HCT116 (cell line): ENCODE measurements at regions of chr16 and their contacts with region 1.

Region 1: GRCh38 chr16:19105891-19106624 is 7.7 kb upstream of the ITPRIPL2 start:
- DNase-seq: no peak
- ATAC-seq: no peak
- H3K4me3 ChIP-seq: no peak overlapping the region
- H3K27ac ChIP-seq: no peak overlapping the region
- H3K4me1 ChIP-seq: peaks cover 20 to 59% of the 10 kb centered on the region in 2 experiments
- H3K27me3 ChIP-seq: no peaks in the 10 kb centered on the region
- CTCF ChIP-seq: no peak
- POLR2A ChIP-seq: no peak
- RAD21 ChIP-seq: no peak

Region 2: DNA sequence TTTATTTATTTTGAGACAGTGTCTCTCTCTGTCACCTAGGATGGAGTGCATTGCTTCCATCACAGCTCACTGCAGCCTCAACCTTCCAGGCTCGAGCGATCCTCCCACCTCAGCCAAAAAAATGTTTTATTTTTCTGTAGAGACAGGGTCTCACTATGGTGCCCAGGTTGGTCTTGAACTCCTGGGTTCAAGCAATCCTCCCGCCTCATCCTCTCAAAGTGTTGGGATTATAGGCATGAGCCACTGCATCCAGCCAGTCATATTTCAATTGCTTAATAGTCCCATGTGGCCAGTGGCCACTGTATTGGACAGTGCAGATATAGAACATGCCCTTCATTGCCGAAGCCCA is 107.0 kb before region 1 on chr16:
- CTCF ChIA-PET with region 1: no interaction called
- POLR2A ChIA-PET with region 1: no interaction called
- RAD21 ChIA-PET with region 1: no interaction called
- intact Hi-C with region 1: no loop called
- DNase-seq: no peak
- ATAC-seq: no peak; the same call in 1 of the 2 replicates
- H3K4me3 ChIP-seq: 0 out of 4 replicates have a peak overlapping the region, but pooled peaks of 1 of the 2 experiments have one; percentile 10
- H3K27ac ChIP-seq: peak overlapping the region; percentile 76
- H3K4me1 ChIP-seq: peaks cover 19 to 40% of the 10 kb centered on the region in 2 experiments
- H3K27me3 ChIP-seq: no peaks in the 10 kb centered on the region
- CTCF ChIP-seq: no peak
- POLR2A ChIP-seq: no peak
- RAD21 ChIP-seq: no peak

Region 3: DNA sequence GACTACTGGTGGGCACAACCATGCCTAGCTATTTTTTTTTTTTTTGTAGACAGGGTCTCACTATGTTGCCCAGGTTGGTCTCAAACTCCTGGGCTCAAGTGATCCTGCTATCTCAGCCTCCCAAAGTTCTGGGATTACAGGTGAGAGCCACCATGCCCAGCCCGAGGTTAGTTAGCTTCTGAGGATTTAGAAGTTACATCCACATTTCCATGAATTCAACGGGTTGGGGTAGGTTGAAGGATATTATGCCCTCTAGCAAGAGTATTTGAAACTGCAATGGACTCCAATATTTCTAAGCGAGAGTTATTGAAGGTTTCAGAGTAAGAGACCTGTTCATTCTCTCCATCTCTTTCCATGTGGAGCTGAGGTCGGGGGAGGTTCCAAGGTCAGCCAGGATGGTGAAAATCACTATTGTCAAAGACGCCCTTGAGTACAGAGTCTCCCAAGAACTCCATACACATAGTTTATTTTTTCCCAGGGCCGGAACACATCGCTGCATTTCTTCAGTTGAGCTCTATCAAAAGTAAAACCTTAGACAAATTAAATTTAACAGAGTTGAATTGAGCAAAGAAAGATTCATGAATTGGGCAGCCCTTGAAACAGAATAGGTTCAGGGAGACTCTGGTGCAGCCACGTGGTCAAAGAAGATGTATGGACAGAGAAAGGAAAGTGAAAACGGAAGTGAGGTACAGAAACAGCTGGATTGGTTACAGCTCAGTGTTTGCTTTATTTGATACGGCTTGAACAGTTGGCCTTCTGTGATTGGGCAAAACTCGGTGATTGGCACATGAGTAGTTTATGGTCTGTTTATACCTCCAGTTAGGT is 11.3 kb before region 1 on chr16:
- CTCF ChIA-PET with region 1: interaction called, 10 read pairs
- POLR2A ChIA-PET with region 1: interaction called, 15 read pairs
- RAD21 ChIA-PET with region 1: no interaction called
- intact Hi-C with region 1: no loop called
- DNase-seq: peak; percentile 56
- ATAC-seq: peak; percentile 76
- H3K4me3 ChIP-seq: no peak overlapping the region
- H3K27ac ChIP-seq: peak overlapping the region; percentile 78; the same call in 1 of the 2 replicates
- H3K4me1 ChIP-seq: peaks cover 24 to 42% of the 10 kb centered on the region in 2 experiments
- H3K27me3 ChIP-seq: no peaks in the 10 kb centered on the region
- CTCF ChIP-seq: peak in 2 of 3 experiments; percentile 8 to 33; a peak in 2 of 6 replicates
- POLR2A ChIP-seq: no peak
- RAD21 ChIP-seq: no peak

Region 4: GRCh38 chr16:19118938-19119431 is 12.9 kb after region 1 on chr16:
- CTCF ChIA-PET with region 1: interaction called, 4 read pairs
- POLR2A ChIA-PET with region 1: interaction called, 13 read pairs
- RAD21 ChIA-PET with region 1: no interaction called
- intact Hi-C with region 1: no loop called
- DNase-seq: no peak
- ATAC-seq: no peak
- H3K4me3 ChIP-seq: peak overlapping the region; percentile 3 to 46; a peak in 3 of 4 replicates
- H3K27ac ChIP-seq: peak overlapping the region; percentile 77
- H3K4me1 ChIP-seq: peaks cover 45 to 60% of the 10 kb centered on the region in 2 experiments
- H3K27me3 ChIP-seq: no peaks in the 10 kb centered on the region
- CTCF ChIP-seq: no peak
- POLR2A ChIP-seq: no peak
- RAD21 ChIP-seq: peak; percentile 24; the same call in 1 of the 2 replicates

Region 5: GRCh38 chr16:19142939-19143598 is 37.0 kb after region 1 on chr16:
- CTCF ChIA-PET with region 1: no interaction called
- POLR2A ChIA-PET with region 1: no interaction called
- RAD21 ChIA-PET with region 1: no interaction called
- intact Hi-C with region 1: no loop called
- DNase-seq: no peak
- ATAC-seq: no peak
- H3K4me3 ChIP-seq: no peak overlapping the region
- H3K27ac ChIP-seq: no peak overlapping the region
- H3K4me1 ChIP-seq: peaks cover 5 to 12% of the 10 kb centered on the region in 2 experiments; a peak in 3 of 4 replicates
- H3K27me3 ChIP-seq: no peaks in the 10 kb centered on the region
- CTCF ChIP-seq: no peak
- POLR2A ChIP-seq: no peak
- RAD21 ChIP-seq: no peak